Activated B cell treated with CpG ODN at 0.5 μM for 24 hours (primary cell): ENCODE measurements at regions of chrX and their contacts with region 1.

Region 1: DNA sequence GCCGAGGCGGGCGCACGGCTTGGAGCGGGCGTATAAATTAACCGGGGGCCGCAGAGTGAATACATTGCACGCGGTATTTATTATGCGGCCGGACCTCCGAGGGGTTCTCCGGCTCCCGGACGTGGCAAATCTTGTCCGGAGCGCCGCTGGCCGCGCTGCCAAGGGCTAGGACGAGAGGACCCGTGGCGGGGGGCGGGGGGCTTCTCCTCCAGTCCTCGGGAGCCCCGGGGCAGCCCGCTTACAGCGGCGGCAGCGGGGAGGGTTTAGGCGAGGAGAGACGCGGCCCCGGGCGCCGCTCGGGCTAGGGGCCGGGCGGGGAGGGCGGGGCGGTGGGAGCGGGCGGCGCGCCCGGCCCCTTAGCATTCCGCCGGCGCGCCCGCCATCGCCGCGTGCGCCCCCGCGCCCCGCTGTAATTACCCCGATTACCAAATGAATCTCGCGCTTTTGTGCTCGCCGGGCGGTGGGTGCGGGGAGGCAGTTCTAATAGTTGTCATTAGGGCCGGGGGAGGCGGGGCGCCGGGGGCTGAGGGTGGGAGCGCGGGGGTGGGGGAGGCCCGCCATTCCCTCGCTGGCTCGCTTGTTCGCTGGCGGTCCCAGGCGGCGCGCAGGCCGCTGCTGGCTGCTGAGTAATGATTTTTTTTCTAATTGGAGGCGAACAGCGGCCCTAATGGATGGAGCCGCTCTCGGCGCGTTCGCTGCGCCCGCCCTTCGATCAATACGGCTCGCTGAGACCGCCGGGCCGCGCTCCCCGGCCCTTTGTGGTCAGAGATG is 276.6 kb downstream of the BCOR start:
- DNase-seq: no peak
- ATAC-seq: peak; percentile 28
- H3K4me3 Mint-ChIP-seq: no peak overlapping the region
- H3K27ac Mint-ChIP-seq: no peak overlapping the region
- H3K4me1 Mint-ChIP-seq: peaks cover 9% of the 10 kb centered on the region
- H3K27me3 Mint-ChIP-seq: peaks cover 28% of the 10 kb centered on the region
- CTCF ChIP-seq: no peak

Region 2: DNA sequence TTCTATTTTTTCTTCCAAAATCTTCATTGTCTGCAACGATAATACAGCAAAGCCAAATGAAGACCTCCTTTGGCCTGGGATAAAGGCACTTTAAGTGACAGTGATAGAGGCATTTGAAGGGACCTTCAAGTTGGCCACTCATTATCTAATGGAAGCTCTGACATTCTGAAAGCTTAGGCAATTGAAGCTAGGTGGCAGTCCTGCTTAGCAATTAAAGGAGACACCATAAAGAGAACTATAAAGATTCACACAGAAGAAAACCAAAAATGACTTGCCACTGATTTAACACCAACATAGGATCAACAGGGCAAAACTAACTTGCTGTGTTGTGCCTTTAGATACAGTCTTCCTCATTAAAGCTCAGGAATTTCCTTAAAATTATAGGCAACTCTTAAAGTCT is 1363.1 kb before region 1 on chrX:
- CTCF ChIA-PET with region 1: no interaction called
- POLR2A ChIA-PET with region 1: no interaction called
- intact Hi-C with region 1: no loop called
- DNase-seq: no peak
- ATAC-seq: no peak
- H3K4me3 Mint-ChIP-seq: no peak overlapping the region
- H3K27ac Mint-ChIP-seq: no peak overlapping the region
- H3K4me1 Mint-ChIP-seq: no peaks in the 10 kb centered on the region
- H3K27me3 Mint-ChIP-seq: peaks cover 2% of the 10 kb centered on the region
- CTCF ChIP-seq: no peak

Region 3: DNA sequence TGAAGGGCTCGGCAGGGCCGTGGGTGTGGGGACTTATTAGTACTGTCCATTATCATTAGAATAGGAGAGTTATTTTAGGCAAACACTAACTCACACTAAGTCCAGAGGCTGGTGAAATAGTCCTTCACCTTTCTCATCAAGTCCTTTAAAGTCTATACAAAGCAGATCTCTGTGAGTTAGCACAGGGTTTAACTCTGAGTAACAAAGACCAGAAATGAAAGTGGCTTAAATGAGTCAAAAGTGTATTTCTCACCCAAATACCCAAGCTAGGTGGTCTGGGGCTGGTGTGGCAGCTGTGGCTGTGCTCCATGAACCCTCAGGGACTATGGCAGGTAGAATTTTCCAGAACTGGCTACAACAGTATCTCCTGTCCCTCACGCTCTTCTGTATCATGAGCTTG is 13.5 kb after region 1 on chrX:
- CTCF ChIA-PET with region 1: no interaction called
- POLR2A ChIA-PET with region 1: no interaction called
- intact Hi-C with region 1: no loop called
- DNase-seq: no peak
- ATAC-seq: no peak
- H3K4me3 Mint-ChIP-seq: no peak overlapping the region
- H3K27ac Mint-ChIP-seq: no peak overlapping the region
- H3K4me1 Mint-ChIP-seq: no peaks in the 10 kb centered on the region
- H3K27me3 Mint-ChIP-seq: peaks cover 27% of the 10 kb centered on the region
- CTCF ChIP-seq: no peak

Region 4: DNA sequence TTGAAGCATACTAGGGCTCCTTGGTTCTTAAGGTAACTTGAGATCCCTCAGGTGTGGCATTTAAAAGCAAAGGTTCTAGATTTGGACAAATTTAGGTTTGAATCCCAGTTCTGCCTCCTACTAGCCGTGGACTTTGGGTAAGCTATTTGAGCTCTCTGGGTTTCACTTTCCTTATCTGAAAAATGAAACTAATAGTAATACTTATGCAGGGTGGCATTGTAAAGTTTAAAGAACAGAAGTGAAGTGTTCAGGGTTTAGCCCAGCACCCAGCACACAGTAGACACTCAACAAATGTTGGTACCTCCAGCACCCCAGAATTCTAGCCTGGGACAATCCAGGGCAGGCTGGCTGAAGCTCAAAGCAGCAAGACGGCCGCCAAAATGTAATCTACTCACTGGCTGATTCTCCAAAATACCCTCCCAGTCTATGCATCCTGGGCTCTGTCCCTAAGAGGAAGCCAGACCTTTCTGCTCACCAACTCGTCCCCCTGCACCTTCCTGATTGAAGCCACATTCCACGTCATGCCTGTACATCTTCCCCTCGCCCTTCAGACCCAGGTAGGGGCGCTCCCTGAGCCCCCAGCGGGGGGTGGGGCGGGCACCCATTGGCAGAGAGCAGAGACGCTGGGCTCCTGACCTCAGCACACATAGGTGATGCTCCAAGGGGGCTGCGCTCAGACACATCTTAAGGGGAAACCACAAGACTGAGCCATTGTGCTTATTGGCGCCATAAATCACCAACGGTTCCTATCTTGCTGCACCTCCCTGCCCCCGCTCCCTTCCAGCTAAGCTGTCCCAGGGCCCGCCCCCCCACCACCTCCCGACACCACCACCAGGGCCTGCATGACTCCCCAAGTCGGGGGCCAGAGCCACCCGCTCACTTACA is 116.0 kb after region 1 on chrX:
- CTCF ChIA-PET with region 1: no interaction called
- POLR2A ChIA-PET with region 1: no interaction called
- intact Hi-C with region 1: loop called (anchors 10 kb)
- DNase-seq: no peak
- ATAC-seq: no peak
- H3K4me3 Mint-ChIP-seq: peak overlapping the region; percentile 15
- H3K27ac Mint-ChIP-seq: no peak overlapping the region
- H3K4me1 Mint-ChIP-seq: peaks cover 21% of the 10 kb centered on the region
- H3K27me3 Mint-ChIP-seq: no peaks in the 10 kb centered on the region
- CTCF ChIP-seq: no peak